A673 (cell line): ENCODE measurements at regions of chr1 and their contacts with region 1.

Region 1: DNA sequence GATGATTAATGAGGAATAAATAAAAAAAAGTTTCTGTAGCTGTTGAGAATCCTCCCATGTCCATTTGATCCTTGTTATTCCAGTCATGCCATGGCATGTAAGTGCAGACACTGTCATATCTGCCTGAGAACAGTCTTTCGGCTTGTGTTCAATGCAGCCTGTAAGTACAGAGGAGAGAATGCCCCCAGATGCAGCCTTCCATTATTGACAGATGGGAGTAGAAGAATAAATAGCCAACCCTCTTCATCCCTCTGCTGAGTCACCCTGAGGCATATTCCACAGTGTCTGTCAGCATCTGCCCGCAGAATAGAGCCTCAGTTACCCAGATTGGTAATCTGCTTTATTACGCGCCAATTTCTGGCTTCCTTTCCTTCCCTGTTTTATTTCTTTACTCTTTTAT is 139.4 kb downstream of the LRRC7 start:
- DNase-seq: peak; percentile 72
- H3K4me3 ChIP-seq: no peak overlapping the region
- H3K27ac ChIP-seq: no peak overlapping the region
- H3K4me1 ChIP-seq: peaks cover 24% of the 10 kb centered on the region
- H3K27me3 ChIP-seq: peaks cover 3% of the 10 kb centered on the region
- CTCF ChIP-seq: no peak

Region 2: DNA sequence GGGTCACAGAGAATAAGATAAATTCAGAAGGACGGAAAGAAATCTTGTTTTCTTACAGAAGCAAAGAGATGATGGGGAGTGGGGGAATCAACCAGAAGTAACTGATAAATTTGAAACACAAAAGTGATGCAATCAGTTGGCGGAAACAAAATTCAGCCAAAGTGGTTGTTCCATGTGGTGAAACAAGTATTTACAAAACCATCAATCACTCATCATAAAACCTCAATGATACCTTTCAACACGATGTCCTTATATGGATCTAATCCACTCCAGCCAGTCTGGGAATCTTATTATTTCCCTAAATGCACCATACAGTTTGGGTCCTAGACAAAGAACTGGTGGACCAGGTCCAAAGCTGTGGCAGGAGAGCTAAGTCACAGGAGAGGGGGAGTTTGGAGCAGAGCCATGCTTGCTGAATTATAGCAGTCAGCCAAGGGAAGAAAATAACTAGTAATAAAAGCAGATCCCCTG is 443.1 kb before region 1 on chr1:
- CTCF ChIA-PET with region 1: no interaction called
- POLR2A ChIA-PET with region 1: no interaction called
- intact Hi-C with region 1: loop called (anchors 5 kb)
- DNase-seq: peak; percentile 95
- H3K4me3 ChIP-seq: no peak overlapping the region
- H3K27ac ChIP-seq: peak overlapping the region; percentile 57
- H3K4me1 ChIP-seq: peaks cover 22% of the 10 kb centered on the region
- H3K27me3 ChIP-seq: peaks cover 22% of the 10 kb centered on the region
- CTCF ChIP-seq: no peak

Region 3: DNA sequence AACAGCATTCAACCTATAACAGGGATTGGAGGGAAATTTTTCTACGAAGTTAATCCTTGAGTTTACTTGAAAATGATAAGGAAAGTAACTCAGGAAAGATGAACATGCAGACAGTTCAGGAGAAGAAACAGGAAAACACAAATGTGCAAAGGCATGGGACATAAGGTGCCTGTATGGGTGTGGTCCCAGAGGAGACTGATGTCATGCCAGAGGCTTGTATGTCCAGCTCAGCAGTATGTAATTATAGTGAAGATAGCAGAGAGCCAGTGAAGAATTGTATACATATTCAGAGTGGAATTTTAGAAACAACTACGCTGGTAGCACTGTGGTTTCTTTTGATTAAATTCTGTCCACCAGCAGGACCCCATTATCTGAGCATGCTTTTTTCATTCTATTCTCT is 40.1 kb after region 1 on chr1:
- CTCF ChIA-PET with region 1: no interaction called
- POLR2A ChIA-PET with region 1: no interaction called
- intact Hi-C with region 1: no loop called
- DNase-seq: no peak
- H3K4me3 ChIP-seq: no peak overlapping the region
- H3K27ac ChIP-seq: no peak overlapping the region
- H3K4me1 ChIP-seq: no peaks in the 10 kb centered on the region
- H3K27me3 ChIP-seq: no peaks in the 10 kb centered on the region
- CTCF ChIP-seq: no peak

Region 4: GRCh38 chr1:69765941-69766340 is 58.8 kb after region 1 on chr1:
- CTCF ChIA-PET with region 1: no interaction called
- POLR2A ChIA-PET with region 1: no interaction called
- intact Hi-C with region 1: no loop called
- DNase-seq: no peak
- H3K4me3 ChIP-seq: no peak overlapping the region
- H3K27ac ChIP-seq: no peak overlapping the region
- H3K4me1 ChIP-seq: no peaks in the 10 kb centered on the region
- H3K27me3 ChIP-seq: no peaks in the 10 kb centered on the region
- CTCF ChIP-seq: no peak

Region 5: DNA sequence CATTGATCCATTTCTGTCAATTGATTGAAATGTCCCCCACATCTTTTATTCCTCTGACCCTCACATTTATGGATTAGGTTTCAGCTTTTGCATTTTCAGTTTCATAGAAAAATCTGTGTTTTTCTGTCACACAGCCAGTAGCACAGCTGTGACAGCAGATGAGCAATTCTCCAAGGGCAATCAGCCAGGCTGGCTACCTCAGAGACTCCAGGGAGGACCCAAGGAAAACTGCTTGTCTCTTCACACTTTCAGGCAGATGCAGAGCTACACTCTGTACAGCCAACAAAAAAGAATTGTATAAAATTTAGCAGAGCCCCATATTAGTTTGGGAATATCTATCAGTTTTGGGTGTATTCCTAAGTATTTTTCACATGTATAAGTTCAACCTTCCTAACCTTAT is 117.8 kb after region 1 on chr1:
- CTCF ChIA-PET with region 1: no interaction called
- POLR2A ChIA-PET with region 1: no interaction called
- intact Hi-C with region 1: no loop called
- DNase-seq: peak; percentile 9
- H3K4me3 ChIP-seq: no peak overlapping the region
- H3K27ac ChIP-seq: no peak overlapping the region
- H3K4me1 ChIP-seq: no peaks in the 10 kb centered on the region
- H3K27me3 ChIP-seq: no peaks in the 10 kb centered on the region
- CTCF ChIP-seq: no peak